Activated naive CD4-positive, alpha-beta T cell treated with anti-CD3 and anti-CD28 coated beads for 36 hours (primary cell): ENCODE measurements at regions of chr16 and their contacts with region 1.

Region 1: DNA sequence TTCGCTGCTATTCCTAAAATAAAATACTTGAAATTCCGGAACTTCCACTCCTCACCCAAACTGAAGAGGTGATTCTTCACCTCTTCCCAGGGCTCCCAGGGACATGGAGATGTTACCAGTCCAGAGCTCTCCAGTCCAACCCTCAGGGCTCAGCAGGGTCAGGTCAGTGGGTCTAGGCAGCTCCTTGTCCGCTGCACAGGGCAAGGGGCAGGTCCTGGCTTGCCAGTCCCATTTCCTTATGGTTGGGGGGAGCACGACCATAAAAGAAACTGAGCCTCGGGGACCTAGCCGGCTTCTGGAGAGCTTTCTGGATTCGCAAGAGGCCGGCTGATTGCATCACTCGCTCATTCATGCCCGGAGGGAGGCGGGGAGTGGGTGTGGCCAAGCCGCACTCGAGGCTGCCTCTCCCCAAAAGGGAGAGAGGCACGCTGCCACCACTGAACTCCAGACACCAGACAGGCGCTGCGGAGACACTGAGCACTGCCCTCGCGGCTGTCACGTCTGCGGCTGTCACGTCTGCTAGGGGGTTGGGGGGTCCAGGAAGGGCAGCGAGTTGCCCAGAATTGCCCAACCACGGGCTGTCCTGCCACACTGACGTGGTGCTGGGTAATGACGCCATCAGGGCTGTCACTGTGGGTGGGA is 15.8 kb downstream of the SLC7A5 start:
- DNase-seq: peak; percentile 97
- H3K4me3 Mint-ChIP-seq: peak overlapping the region; percentile 61
- H3K27ac Mint-ChIP-seq: peak overlapping the region; percentile 90
- H3K4me1 Mint-ChIP-seq: peaks cover 73% of the 10 kb centered on the region
- H3K27me3 Mint-ChIP-seq: no peaks in the 10 kb centered on the region

Region 2: GRCh38 chr16:87581833-87582203 is 271.7 kb before region 1 on chr16:
- CTCF ChIA-PET with region 1: no interaction called
- intact Hi-C with region 1: no loop called
- DNase-seq: no peak
- H3K4me3 Mint-ChIP-seq: no peak overlapping the region
- H3K27ac Mint-ChIP-seq: no peak overlapping the region
- H3K4me1 Mint-ChIP-seq: no peaks in the 10 kb centered on the region
- H3K27me3 Mint-ChIP-seq: peaks cover 26% of the 10 kb centered on the region

Region 3: GRCh38 chr16:87765776-87766484 is 87.6 kb before region 1 on chr16 and contains the start of gene KLHDC4:
- CTCF ChIA-PET with region 1: interaction called, 10 read pairs
- intact Hi-C with region 1: no loop called
- DNase-seq: peak; percentile 93
- H3K4me3 Mint-ChIP-seq: peak within 1 kb of the TSS; percentile 100
- H3K27ac Mint-ChIP-seq: peak within 1 kb of the TSS; percentile 96
- H3K4me1 Mint-ChIP-seq: peaks cover 43% of the 10 kb centered on the region
- H3K27me3 Mint-ChIP-seq: no peaks in the 10 kb centered on the region
- total RNA-seq, gene KLHDC4: 56.2 to 62.4 TPM

Region 4: DNA sequence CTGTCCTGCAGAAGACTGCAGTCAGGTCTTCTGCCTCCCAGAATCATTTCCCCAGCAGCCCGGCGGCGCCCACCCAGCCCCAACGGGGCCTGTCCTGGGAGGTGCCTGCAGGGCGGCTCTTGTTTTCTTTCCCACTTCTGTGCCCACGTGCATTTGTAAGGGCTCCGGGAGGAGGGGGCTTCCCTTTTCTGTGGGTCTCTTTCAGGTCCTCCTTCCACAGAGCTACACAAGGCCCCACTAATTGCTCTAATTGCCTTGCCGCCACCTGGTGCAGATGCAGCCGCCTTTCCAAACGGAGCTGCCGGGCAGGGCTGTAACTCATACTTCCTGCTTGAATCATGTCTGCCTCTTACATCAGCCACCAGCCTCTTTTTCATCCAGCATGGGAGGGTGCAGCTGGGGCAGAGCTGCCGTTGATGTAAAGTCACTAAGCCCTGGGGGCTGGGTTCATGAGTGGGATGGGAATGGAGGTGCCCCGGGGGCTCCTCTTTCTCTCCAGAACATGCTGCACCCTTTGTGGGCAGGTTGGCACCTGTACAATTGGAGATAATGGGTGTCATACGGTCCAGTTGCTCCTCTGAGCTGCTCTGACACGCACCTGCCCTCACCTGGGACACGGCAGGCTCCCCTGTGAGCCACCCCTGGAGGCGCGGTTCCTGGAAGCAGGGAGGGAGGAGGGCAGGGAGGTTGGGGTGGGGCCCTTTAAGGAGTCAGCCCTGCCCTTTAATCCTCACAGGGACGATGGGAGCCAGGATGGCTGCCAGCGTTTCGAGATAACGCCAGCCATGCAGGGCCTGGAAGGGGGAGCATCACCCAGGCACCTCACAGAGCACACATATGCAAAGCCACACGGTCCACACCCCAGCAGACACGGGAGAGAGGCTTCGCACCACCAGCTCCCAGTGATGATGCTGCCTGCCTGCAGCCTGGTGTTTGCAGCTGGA is 46.7 kb before region 1 on chr16:
- CTCF ChIA-PET with region 1: interaction called, 17 read pairs
- intact Hi-C with region 1: no loop called
- DNase-seq: peak; percentile 88
- H3K4me3 Mint-ChIP-seq: peak overlapping the region; percentile 89
- H3K27ac Mint-ChIP-seq: peak overlapping the region; percentile 94
- H3K4me1 Mint-ChIP-seq: peaks cover 31% of the 10 kb centered on the region
- H3K27me3 Mint-ChIP-seq: no peaks in the 10 kb centered on the region

Region 5: DNA sequence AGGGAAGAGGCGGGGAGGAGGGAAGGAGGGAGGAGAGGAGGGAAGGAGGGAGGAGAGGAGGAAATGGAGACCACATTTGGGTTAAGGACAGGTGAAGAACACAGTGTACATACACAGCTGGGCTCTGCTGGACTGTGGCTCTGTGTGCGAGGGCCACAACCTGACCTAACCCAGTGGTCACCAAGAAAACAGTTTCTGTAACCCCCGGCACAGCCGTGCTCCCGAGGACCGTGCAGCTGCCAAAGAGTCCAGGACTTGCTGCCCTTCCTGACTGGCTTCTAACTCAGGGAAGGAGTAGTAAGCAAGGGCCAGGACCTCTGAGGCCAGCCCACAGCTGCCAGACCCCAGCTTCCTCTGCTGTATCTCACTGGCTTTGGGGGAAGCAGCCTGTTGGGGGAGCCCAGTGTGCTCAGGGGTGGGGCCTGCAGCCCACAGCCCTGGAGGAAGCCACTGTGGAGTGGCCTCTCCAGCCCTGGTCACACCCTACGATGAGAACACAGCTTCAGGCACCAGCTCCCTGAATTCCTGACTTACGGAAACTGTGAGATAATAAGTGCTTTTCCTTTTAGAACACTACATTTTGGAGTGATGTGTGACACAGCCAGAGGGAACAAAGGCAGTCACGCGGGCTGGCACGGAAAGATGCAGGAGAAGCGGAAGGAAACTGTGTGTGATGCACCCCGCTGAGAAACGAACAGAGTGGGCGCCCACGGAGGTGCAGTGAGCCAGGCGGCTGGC is 16.5 kb before region 1 on chr16:
- CTCF ChIA-PET with region 1: interaction called, 24 read pairs
- intact Hi-C with region 1: no loop called
- DNase-seq: no peak
- H3K4me3 Mint-ChIP-seq: no peak overlapping the region
- H3K27ac Mint-ChIP-seq: peak overlapping the region; percentile 53
- H3K4me1 Mint-ChIP-seq: no peaks in the 10 kb centered on the region
- H3K27me3 Mint-ChIP-seq: no peaks in the 10 kb centered on the region

Region 6: GRCh38 chr16:87877938-87878507 is 24.5 kb after region 1 on chr16:
- CTCF ChIA-PET with region 1: interaction called, 45 read pairs
- intact Hi-C with region 1: no loop called
- DNase-seq: peak; percentile 71
- H3K4me3 Mint-ChIP-seq: no peak overlapping the region
- H3K27ac Mint-ChIP-seq: no peak overlapping the region
- H3K4me1 Mint-ChIP-seq: peaks cover 47% of the 10 kb centered on the region
- H3K27me3 Mint-ChIP-seq: peaks cover 5% of the 10 kb centered on the region

Region 7: GRCh38 chr16:88905563-88905962 is 1052.0 kb after region 1 on chr16:
- CTCF ChIA-PET with region 1: no interaction called
- intact Hi-C with region 1: no loop called
- DNase-seq: no peak
- H3K4me3 Mint-ChIP-seq: no peak overlapping the region
- H3K27ac Mint-ChIP-seq: no peak overlapping the region
- H3K4me1 Mint-ChIP-seq: no peaks in the 10 kb centered on the region
- H3K27me3 Mint-ChIP-seq: no peaks in the 10 kb centered on the region